MCF 10A (cell line): ENCODE measurements at regions of chr1 and their contacts with region 1.

Region 1: DNA sequence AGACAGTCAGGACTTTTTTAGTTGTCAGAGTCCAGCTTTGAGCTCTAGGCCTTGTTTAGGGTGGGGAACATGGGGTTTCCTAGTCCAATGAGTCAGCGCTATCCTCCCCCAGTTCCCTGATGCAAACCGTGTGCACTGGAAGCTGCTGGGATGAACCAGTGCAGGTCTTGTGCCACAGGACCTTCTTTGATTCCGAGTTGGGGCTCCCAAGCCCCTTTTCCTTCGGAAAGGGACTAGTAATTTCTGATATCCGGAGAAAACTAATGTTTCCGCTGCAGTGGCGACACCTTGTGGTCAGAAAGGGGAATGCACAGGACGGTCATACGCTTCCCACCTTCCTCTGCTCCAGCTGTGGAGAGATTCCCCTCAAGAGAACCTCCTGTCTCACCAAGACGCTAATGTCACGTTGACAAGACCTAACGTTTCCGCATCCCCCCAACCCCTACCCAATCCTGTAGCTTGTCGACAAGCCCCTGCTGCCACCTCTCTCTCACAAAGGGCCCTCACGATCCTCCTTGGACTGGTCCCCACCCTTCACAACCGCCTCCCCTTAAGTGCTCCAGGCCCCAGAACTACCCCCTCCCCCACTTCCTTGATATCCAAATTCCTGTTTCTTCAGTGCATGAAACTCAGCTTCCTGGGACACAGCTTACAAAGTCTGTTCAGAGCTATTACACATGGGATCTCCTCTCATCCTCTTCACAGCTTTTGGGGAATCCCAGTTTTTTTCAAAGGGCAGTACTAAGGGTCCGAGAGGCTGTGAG is 30.9 kb downstream of the GPA33 start:
- DNase-seq: peak; percentile 79
- H3K4me3 Mint-ChIP-seq: no peak overlapping the region
- H3K27ac Mint-ChIP-seq: no peak overlapping the region
- H3K4me1 Mint-ChIP-seq: peaks cover 5% of the 10 kb centered on the region
- H3K27me3 Mint-ChIP-seq: no peaks in the 10 kb centered on the region
- CTCF ChIP-seq: peak; percentile 99

Region 2: DNA sequence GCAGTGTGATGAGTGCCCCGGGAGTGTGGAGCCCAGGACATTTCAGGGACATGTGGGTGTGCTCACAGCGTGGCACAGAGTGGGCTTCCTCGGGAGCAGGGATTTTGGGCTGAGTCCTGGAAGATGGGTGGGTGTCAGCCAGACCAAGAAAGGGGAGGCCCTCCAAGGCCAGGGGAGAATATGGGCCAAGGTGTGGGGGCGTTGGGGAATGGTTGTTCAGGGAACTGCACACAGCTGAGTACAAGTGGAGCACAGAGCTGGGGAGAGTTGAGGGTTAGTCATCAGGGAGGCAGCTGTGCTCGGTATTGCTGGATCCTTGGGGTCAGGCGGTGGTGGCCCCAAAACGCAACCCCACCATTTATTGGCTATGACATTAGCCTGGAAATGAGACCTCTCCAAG is 214.4 kb before region 1 on chr1:
- CTCF ChIA-PET with region 1: interaction called, 24 read pairs
- POLR2A ChIA-PET with region 1: interaction called, 3 read pairs
- intact Hi-C with region 1: no loop called
- DNase-seq: no peak
- H3K4me3 Mint-ChIP-seq: no peak overlapping the region
- H3K27ac Mint-ChIP-seq: peak overlapping the region; percentile 3
- H3K4me1 Mint-ChIP-seq: peaks cover 30% of the 10 kb centered on the region
- H3K27me3 Mint-ChIP-seq: no peaks in the 10 kb centered on the region
- CTCF ChIP-seq: no peak

Region 3: DNA sequence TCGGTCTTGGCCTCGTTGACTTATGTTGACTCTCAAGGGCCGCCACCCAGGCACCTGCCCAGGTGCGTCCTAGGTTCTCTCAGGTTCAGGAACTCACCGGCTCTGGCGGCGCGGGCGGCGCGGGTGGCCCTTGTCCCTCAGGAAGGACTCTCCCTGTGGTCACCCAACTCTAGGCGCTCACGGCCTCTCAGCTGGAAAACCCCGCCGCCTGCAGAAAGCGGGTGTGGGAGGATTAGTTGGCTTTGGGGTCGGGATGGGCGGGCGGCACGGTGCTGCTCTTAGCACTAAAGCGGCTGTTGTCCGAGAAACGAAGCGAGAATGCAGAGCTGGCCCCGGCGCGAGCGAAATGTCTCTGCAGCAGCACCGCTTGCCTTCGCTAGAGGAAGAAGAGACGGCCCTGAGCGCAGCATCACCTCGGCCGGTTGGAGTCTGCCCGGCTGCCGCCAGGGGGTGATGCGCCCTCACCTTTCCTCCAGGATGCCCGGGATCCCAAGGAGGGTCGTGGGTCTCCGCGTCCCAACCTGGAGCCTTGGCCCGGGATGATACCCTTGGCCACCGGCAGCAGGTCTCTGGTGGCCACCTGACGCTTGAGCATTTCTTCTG is 175.1 kb before region 1 on chr1:
- CTCF ChIA-PET with region 1: interaction called, 89 read pairs
- POLR2A ChIA-PET with region 1: no interaction called
- intact Hi-C with region 1: no loop called
- DNase-seq: no peak
- H3K4me3 Mint-ChIP-seq: no peak overlapping the region
- H3K27ac Mint-ChIP-seq: no peak overlapping the region
- H3K4me1 Mint-ChIP-seq: no peaks in the 10 kb centered on the region
- H3K27me3 Mint-ChIP-seq: no peaks in the 10 kb centered on the region
- CTCF ChIP-seq: peak; percentile 39

Region 4: GRCh38 chr1:166950156-166950555 is 109.1 kb before region 1 on chr1:
- CTCF ChIA-PET with region 1: interaction called, 26 read pairs
- POLR2A ChIA-PET with region 1: no interaction called
- intact Hi-C with region 1: no loop called
- DNase-seq: no peak
- H3K4me3 Mint-ChIP-seq: no peak overlapping the region
- H3K27ac Mint-ChIP-seq: no peak overlapping the region
- H3K4me1 Mint-ChIP-seq: peaks cover 10% of the 10 kb centered on the region
- H3K27me3 Mint-ChIP-seq: peaks cover 36% of the 10 kb centered on the region
- CTCF ChIP-seq: no peak

Region 5: DNA sequence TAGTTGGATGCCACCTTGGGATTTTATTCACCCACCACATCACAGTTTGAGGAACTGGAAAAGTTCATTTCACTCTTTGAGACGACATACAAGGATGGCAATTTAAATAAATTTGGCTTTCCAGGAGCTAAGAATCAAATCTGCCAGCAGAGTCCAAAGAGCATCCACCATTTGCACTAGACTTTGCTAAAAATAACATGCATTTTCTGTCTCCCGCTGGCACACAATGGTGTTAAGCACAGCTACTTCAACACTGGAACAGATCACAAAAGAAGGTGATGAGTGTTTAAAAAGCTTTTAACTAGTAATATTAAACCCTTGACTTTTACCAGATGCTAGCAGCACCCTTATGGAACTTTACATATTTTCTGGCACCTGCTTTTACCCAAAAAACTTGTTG is 25.6 kb before region 1 on chr1:
- CTCF ChIA-PET with region 1: interaction called, 16 read pairs
- POLR2A ChIA-PET with region 1: no interaction called
- intact Hi-C with region 1: no loop called
- DNase-seq: no peak
- H3K4me3 Mint-ChIP-seq: no peak overlapping the region
- H3K27ac Mint-ChIP-seq: no peak overlapping the region
- H3K4me1 Mint-ChIP-seq: no peaks in the 10 kb centered on the region
- H3K27me3 Mint-ChIP-seq: peaks cover 34% of the 10 kb centered on the region
- CTCF ChIP-seq: no peak

Region 6: DNA sequence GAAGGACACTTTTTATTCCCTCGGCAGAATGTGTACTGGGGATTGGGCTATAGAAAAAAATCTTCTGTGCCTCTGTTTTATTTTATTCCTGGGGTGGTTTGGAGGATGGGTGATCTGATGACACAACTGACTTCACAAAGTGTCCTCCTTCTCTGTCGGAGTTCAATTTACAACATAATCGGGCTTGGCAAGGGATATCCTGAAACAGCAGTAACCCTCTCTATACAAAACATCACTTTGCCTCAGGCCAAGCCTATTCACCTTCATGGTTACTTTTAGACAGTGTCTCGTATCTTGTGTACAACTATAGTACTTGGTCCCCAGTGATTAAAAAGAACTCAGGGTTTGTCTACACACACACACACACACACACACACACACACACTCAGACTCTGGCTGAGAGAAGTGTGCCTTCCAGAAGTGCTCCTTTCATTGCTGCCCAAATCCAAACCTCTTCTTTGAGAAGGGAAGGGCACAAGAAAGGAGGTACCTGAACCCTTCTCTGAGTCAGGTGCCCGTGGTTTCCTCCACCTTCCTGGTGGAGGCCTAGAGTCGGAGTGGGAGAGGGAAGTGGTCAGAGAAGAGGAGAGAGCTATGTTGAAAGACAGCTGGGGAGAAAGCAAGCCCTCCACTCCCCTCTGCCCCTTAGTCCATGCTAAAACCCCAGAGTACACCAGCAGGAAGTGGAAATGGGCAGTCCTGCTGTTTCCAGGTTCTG is 99.0 kb after region 1 on chr1:
- CTCF ChIA-PET with region 1: interaction called, 11 read pairs
- POLR2A ChIA-PET with region 1: interaction called, 3 read pairs
- intact Hi-C with region 1: no loop called
- DNase-seq: no peak
- H3K4me3 Mint-ChIP-seq: no peak overlapping the region
- H3K27ac Mint-ChIP-seq: no peak overlapping the region
- H3K4me1 Mint-ChIP-seq: peaks cover 23% of the 10 kb centered on the region
- H3K27me3 Mint-ChIP-seq: no peaks in the 10 kb centered on the region
- CTCF ChIP-seq: no peak